ENCODE measurements at regions of chr7 and their contacts with region 1.

Region 1: GRCh38 chr7:149497456-149498261 is at the start of gene ZNF746:
- DNase-seq: peak; percentile 76
- ATAC-seq: peak; percentile 91
- H3K4me3 ChIP-seq: peak within 1 kb of the TSS; percentile 100
- H3K27ac ChIP-seq: peak within 1 kb of the TSS; percentile 100
- H3K4me1 ChIP-seq: peaks cover 11% of the 10 kb centered on the region
- H3K27me3 ChIP-seq: peaks cover 15% of the 10 kb centered on the region
- CTCF ChIP-seq: peak; percentile 85
- POLR2A ChIP-seq: peak; percentile 58; the same call in 1 of the 2 replicates
- RAD21 ChIP-seq: peak; percentile 65
- total RNA-seq, gene ZNF746: 6.6 and 6.7 TPM in 2 replicates

Region 2: GRCh38 chr7:149440222-149440621 is 57.4 kb before region 1 on chr7:
- CTCF ChIA-PET with region 1: no interaction called
- POLR2A ChIA-PET with region 1: no interaction called
- dilution Hi-C with region 1: no loop called
- in situ Hi-C with region 1: no loop called
- intact Hi-C with region 1: no loop called
- DNase-seq: peak; percentile 14
- ATAC-seq: no peak
- H3K4me3 ChIP-seq: no peak overlapping the region
- H3K27ac ChIP-seq: no peak overlapping the region
- H3K4me1 ChIP-seq: no peaks in the 10 kb centered on the region
- H3K27me3 ChIP-seq: no peaks in the 10 kb centered on the region
- CTCF ChIP-seq: no peak
- POLR2A ChIP-seq: no peak
- RAD21 ChIP-seq: no peak

Region 3: GRCh38 chr7:149460493-149461277 is 37.0 kb before region 1 on chr7 and contains the start of gene ZNF777:
- CTCF ChIA-PET with region 1: interaction called, 3 read pairs
- POLR2A ChIA-PET with region 1: no interaction called
- dilution Hi-C with region 1: no loop called
- in situ Hi-C with region 1: no loop called
- intact Hi-C with region 1: loop called (anchors 1 kb)
- DNase-seq: peak; percentile 87
- ATAC-seq: peak; percentile 97
- H3K4me3 ChIP-seq: peak within 1 kb of the TSS; percentile 91
- H3K27ac ChIP-seq: peak within 1 kb of the TSS; percentile 79
- H3K4me1 ChIP-seq: peaks cover 5% of the 10 kb centered on the region; the same call in 1 of the 2 replicates
- H3K27me3 ChIP-seq: no peaks in the 10 kb centered on the region
- CTCF ChIP-seq: peak; percentile 60
- POLR2A ChIP-seq: peak; percentile 63; the same call in 1 of the 2 replicates
- RAD21 ChIP-seq: 0 out of 2 replicates have a peak, but pooled peaks have one; percentile 26
- total RNA-seq, gene ZNF777: 3.2 and 3.6 TPM in 2 replicates

Region 4: DNA sequence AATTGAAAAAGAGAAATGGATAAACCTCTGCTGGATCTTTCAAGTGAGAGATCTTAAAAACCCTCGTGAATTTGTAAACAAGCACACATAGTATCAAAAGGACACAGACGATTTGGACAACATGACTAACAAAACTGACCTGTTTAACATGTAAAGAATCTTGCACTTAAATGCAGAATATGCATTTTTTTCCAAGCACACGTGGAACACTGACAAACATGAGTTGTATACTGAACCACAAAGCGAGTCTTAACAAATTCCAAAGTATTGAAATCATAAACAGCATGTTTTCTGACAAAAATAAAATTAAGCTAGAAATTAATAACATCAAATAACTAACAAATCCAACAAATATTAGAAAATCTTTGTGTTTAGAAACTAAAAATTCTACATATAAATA is 64.9 kb after region 1 on chr7:
- CTCF ChIA-PET with region 1: no interaction called
- POLR2A ChIA-PET with region 1: no interaction called
- dilution Hi-C with region 1: no loop called
- in situ Hi-C with region 1: no loop called
- intact Hi-C with region 1: loop called (anchors 2 kb)
- DNase-seq: peak; percentile 63
- ATAC-seq: peak; percentile 41; the same call in 1 of the 2 replicates
- H3K4me3 ChIP-seq: no peak overlapping the region
- H3K27ac ChIP-seq: no peak overlapping the region
- H3K4me1 ChIP-seq: peaks cover 18% of the 10 kb centered on the region
- H3K27me3 ChIP-seq: no peaks in the 10 kb centered on the region
- CTCF ChIP-seq: no peak
- POLR2A ChIP-seq: no peak
- RAD21 ChIP-seq: no peak